AG04450 (cell line): ENCODE measurements at regions of chr9 and their contacts with region 1.

Region 1: DNA sequence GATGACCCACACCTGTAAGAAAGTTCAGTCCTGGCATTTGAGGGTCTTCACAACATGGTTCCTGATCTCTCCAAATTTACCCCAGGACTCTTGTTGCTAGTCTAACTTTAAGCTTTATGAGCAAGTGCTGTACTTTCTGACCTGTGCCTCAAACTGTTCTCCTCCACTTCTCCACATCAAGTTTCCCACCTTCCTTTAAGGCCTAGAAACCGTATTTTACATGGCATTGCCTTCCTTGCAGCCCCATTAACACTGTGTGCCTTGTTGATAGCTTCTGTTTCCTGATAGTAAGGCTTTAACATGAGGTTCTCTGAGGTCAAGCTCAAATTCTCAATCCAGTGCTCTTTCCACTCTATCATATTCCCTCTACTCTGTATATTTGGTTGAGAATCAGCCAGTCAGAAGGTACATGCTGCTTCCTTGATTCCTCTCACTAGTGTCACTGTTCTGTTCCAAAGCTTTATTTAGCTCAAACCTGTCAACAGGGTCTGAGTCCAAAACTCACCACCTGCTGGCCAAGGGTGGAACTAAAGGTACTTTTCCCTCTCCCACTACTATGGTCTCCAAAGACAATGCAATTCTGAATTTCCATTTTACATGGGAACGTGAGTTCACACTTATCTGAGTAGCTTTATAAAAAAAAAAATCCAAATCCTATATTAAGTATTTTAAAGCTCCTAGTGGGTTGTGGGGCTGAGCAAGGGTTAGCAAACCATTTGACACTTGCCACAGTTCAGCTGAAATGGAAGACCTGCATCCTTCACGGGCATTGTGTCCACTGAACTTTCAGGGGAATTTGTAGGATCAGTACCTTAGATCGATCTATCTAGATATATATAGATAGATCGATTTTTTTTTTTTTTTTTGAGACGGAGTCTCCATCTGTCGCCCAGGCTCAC is 21.1 kb downstream of the VCP start:
- DNase-seq: no peak
- H3K4me3 ChIP-seq: no peak overlapping the region
- H3K27ac ChIP-seq: peak overlapping the region; percentile 31
- H3K27me3 ChIP-seq: no peaks in the 10 kb centered on the region
- CTCF ChIP-seq: peak; percentile 75

Region 2: GRCh38 chr9:34994260-34994899 is 56.9 kb before region 1 on chr9:
- CTCF ChIA-PET with region 1: interaction called, 16 read pairs
- POLR2A ChIA-PET with region 1: no interaction called
- DNase-seq: no peak
- H3K4me3 ChIP-seq: no peak overlapping the region
- H3K27ac ChIP-seq: peak overlapping the region; percentile 85
- H3K27me3 ChIP-seq: no peaks in the 10 kb centered on the region
- CTCF ChIP-seq: peak; percentile 71

Region 3: DNA sequence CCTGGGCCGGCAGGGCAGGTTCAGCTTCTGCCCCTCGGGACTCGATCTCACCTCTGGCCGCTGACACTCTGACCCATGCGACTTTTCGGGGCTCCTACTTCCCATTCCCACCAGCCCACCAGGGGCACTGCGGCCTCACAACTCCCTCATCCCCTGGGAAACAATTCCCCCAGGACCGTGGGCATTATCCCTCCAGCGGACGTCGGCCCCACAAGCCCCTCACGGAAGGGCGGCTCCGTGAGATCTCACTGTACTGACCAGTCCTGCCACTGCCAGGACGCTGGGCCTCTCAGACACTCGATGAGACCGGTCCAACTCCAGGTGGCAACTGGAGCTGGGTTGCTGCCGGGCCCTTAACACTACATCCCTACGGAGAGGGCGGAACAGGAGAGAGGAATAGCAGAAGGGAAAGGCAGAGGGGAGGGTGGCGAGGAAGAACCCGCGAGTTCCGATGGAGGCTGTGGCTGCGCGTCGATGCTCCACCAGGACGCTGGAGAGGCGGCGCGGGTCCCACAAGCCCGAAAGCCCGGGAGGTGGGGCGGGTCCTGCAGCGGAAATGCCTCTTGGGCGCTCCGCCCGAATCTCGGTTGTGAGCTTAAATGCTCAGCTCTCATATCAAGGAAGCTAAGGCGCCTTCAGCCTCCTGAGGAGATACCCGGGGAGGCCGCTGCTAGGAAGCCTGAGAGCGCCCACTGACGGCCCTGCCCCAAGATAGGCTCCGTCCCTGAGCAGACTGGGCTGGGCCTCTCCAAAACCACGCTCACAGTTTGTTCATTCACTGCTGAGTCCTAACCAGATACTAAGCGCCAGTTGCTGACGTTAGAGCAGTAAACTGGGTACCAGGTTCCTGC is 15.2 kb before region 1 on chr9:
- CTCF ChIA-PET with region 1: interaction called, 20 read pairs
- POLR2A ChIA-PET with region 1: no interaction called
- DNase-seq: no peak
- H3K4me3 ChIP-seq: peak overlapping the region; percentile 37
- H3K27ac ChIP-seq: no peak overlapping the region
- H3K27me3 ChIP-seq: no peaks in the 10 kb centered on the region
- CTCF ChIP-seq: no peak

Region 4: GRCh38 chr9:35079426-35080341 is 28.4 kb after region 1 on chr9 and contains the start of gene FANCG:
- CTCF ChIA-PET with region 1: interaction called, 11 read pairs
- POLR2A ChIA-PET with region 1: no interaction called
- DNase-seq: peak; percentile 69
- H3K4me3 ChIP-seq: peak within 1 kb of the TSS; percentile 81
- H3K27ac ChIP-seq: peak within 1 kb of the TSS; percentile 47
- H3K27me3 ChIP-seq: no peaks in the 10 kb centered on the region
- CTCF ChIP-seq: no peak
- polyA plus RNA-seq, gene FANCG: 8.5 and 9.1 TPM in 2 replicates

Region 5: DNA sequence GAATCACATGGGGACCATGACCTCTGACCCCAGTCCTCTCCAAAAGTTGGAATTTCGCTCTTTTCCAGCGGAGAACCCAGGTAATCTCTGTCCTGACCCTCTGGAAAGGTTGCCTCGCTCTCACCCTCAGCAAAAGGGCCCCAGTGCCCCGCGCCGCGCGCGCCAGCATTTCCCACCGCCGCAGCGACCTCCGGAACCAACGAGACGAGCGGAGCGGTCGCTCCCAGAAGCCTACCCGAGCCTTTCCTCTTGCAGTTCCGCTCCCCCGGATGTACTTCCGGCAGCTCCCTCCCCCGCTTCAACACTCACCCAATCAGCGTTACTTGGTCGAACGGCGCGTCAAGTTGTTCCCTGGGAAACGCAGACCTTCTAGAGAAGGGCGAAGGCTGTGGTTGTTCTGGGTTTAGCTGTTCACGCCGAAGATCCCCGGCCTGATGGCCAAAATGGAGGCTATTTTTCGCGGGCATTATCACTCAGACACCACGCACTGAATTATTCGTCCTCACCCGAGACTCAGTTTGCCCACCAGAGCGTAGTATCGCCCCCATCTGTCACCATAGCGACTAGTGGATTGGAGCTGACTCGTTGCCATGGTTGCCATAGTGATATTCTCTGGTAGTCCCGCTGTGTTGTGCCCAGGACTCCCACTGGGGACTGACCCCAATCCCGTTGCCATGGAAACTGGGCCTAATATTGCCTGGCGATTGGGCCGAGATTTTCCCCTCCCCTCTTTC is 51.8 kb after region 1 on chr9 and contains the start of gene STOML2:
- CTCF ChIA-PET with region 1: no interaction called
- POLR2A ChIA-PET with region 1: no interaction called
- DNase-seq: peak; percentile 90
- H3K4me3 ChIP-seq: peak within 1 kb of the TSS; percentile 82
- H3K27ac ChIP-seq: peak within 1 kb of the TSS; percentile 55
- H3K27me3 ChIP-seq: no peaks in the 10 kb centered on the region
- CTCF ChIP-seq: no peak
- polyA plus RNA-seq, gene STOML2: 125 and 151 TPM in 2 replicates

Region 6: DNA sequence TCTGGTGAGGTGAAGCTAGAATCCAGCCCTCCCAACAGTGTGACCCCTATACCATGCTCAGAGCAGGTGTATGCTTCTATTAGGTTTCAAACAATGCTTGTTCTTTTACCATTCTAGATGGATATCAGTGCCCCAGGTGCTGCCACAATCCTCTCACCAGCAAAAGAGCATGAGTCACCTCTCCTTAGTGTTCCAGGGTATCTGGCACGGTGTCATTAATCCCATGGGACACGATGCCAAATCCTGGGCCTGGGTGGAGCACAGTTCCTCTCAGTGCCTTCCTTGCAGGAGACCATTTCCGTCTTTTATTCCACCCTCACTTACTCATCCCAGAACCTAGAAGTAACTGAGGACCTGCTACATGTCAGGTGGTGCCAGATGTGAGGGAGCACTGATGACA is 820.2 kb after region 1 on chr9:
- CTCF ChIA-PET with region 1: no interaction called
- POLR2A ChIA-PET with region 1: no interaction called
- DNase-seq: no peak
- H3K4me3 ChIP-seq: no peak overlapping the region
- H3K27ac ChIP-seq: no peak overlapping the region
- H3K27me3 ChIP-seq: peaks cover 3% of the 10 kb centered on the region
- CTCF ChIP-seq: no peak